Posterior vena cava (tissue), 2 donors: ENCODE measurements at regions of chr1 and their contacts with region 1.

Region 1: GRCh38 chr1:43529206-43529731 is 1.4 kb upstream of the PTPRF start:
- DNase-seq: peak; percentile 96

Region 2: GRCh38 chr1:43227143-43227764 is 302.0 kb before region 1 on chr1:
- intact Hi-C with region 1: loop called in 1 of 2 experiments (anchors 10 kb)
- DNase-seq: peak; percentile 93

Region 3: DNA sequence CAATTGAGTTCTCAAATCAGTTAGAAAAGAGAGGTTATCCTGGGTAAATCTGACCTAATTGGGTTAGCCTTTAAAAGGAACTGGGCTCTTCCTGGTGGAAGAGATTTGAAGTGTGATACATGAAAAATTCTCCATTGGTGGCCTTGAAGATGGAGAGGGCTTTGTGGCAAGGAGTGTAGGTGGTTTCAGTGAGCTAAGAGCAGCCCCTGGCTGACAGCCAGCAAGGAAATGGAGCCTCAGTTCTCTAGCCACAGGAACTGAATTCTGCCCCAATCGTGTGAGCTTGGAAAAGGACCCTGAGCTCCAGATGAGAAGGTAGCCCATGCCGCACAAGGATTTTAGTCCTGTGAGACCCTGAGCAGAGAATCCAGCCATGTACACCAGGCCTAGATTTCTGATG is 62.9 kb before region 1 on chr1:
- intact Hi-C with region 1: no loop called
- DNase-seq: no peak

Region 4: GRCh38 chr1:43573066-43573800 is 44.0 kb after region 1 on chr1:
- intact Hi-C with region 1: no loop called
- DNase-seq: no peak

Region 5: DNA sequence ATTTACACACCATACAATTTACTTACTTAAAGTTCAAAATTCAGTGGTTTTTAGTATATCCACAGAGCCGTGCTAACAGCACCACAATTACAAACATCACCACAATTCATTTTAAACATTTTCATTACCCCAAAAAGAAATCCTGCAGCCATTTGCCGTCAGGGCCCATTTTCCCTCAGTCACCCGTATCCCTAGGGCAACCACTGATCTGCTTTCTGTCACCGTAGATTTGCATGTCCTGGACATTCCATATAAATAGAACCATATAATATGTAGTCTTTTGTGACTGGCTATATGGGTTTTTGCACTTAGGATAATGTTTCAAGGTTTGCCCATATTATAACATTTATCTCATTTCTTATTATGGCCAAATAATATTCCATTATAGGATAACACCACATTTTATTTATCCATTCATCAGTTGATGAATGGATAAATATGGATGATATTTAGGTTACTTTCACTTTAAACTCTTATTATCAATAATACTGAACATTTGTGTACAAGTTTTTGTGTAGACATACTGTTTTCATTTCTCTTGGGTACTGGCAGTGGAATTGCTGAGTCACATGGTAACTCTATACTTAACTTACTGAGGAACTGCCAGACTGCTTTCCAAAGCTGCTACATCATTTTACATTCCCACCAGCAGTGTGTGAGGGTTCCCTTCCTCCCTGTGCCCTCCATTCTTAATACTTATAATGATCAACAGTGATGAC is 246.9 kb after region 1 on chr1:
- intact Hi-C with region 1: loop called in 1 of 2 experiments (anchors 10 kb)
- DNase-seq: no peak

Region 6: GRCh38 chr1:43853161-43853921 is 324.1 kb after region 1 on chr1:
- intact Hi-C with region 1: no loop called
- DNase-seq: no peak